HepG2 (cell line): ENCODE measurements at regions of chr20 and their contacts with region 1.

Region 1: DNA sequence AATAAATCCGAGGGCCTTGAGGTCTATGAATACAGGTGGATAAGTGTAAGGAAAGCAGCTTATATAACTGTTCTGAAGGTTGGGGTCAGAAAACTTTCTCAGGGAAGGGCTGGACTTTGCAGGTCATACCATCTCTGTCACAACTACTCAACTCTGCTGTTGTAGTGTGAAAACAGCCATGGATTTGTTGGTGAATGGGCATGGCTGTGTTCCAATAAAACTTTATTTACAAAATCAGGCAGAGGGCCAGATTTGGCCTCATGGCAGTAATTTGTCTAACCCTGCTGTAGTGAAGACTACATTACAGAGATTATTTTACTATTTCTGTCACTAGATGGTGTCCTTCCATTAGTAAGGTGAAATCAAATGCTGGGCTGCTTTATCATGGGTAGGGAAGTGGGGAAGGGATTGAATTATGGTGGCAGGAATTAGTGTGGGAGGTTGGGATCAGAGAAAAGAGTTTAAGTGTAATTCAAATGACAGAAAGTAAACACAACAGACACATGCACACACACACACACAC is 409.6 kb upstream of the CHD6 start:
- DNase-seq: no peak
- ATAC-seq: peak; percentile 55
- H3K4me3 ChIP-seq: no peak overlapping the region
- H3K27ac ChIP-seq: no peak overlapping the region
- H3K4me1 ChIP-seq: no peaks in the 10 kb centered on the region
- H3K27me3 ChIP-seq: no peaks in the 10 kb centered on the region
- CTCF ChIP-seq: peak; percentile 44
- EP300 ChIP-seq: no peak
- POLR2A ChIP-seq: no peak
- RAD21 ChIP-seq: no peak

Region 2: DNA sequence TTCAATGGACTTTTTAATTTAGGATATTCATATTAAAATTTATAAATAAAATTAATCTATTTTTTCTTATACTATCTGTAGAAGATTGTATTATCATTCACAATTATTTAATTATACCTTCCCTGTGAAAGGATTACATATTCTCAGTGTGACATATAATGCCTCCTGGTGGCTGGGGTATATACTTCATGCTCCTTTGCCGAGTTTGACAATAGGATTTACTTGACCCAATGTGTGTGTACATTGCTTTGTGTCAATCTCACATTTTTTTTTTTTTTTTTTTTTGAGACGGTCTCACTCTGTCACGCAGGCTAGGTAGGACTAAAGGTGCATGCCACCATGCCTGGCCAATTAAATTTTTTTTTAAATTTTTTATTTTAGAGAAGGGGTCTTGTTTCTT is 179.6 kb before region 1 on chr20:
- CTCF ChIA-PET with region 1: no interaction called
- POLR2A ChIA-PET with region 1: no interaction called
- in situ Hi-C with region 1: no loop called
- intact Hi-C with region 1: no loop called
- DNase-seq: peak; percentile 29
- ATAC-seq: peak; percentile 47; the same call in 1 of the 3 replicates
- H3K4me3 ChIP-seq: no peak overlapping the region
- H3K27ac ChIP-seq: no peak overlapping the region
- H3K4me1 ChIP-seq: no peaks in the 10 kb centered on the region
- H3K27me3 ChIP-seq: no peaks in the 10 kb centered on the region
- CTCF ChIP-seq: peak; percentile 39
- EP300 ChIP-seq: no peak
- POLR2A ChIP-seq: no peak
- RAD21 ChIP-seq: no peak

Region 3: GRCh38 chr20:42530822-42531448 is 503.1 kb after region 1 on chr20:
- CTCF ChIA-PET with region 1: interaction called, 3 read pairs
- POLR2A ChIA-PET with region 1: no interaction called
- in situ Hi-C with region 1: no loop called
- intact Hi-C with region 1: loop called (anchors 2 kb)
- DNase-seq: peak; percentile 35
- ATAC-seq: peak; percentile 72
- H3K4me3 ChIP-seq: no peak overlapping the region
- H3K27ac ChIP-seq: no peak overlapping the region
- H3K4me1 ChIP-seq: no peaks in the 10 kb centered on the region
- H3K27me3 ChIP-seq: no peaks in the 10 kb centered on the region
- CTCF ChIP-seq: peak; percentile 74
- EP300 ChIP-seq: no peak
- POLR2A ChIP-seq: no peak
- RAD21 ChIP-seq: no peak